Activated T-helper 1 cell treated with anti-CD3 and anti-CD28 coated beads, Interleukin-12 subunit alpha, Interleukin-12 subunit beta, Interleukin-2, Interleukin-4 antibody, amounts not matched to agents 30 ng/mL and 10 ng/mL and 1 ng/mL, durations not matched to agents 14 hours and 24 hours and 36 hours (primary cell): ENCODE measurements at regions of chr15 and their contacts with region 1.

Region 1: DNA sequence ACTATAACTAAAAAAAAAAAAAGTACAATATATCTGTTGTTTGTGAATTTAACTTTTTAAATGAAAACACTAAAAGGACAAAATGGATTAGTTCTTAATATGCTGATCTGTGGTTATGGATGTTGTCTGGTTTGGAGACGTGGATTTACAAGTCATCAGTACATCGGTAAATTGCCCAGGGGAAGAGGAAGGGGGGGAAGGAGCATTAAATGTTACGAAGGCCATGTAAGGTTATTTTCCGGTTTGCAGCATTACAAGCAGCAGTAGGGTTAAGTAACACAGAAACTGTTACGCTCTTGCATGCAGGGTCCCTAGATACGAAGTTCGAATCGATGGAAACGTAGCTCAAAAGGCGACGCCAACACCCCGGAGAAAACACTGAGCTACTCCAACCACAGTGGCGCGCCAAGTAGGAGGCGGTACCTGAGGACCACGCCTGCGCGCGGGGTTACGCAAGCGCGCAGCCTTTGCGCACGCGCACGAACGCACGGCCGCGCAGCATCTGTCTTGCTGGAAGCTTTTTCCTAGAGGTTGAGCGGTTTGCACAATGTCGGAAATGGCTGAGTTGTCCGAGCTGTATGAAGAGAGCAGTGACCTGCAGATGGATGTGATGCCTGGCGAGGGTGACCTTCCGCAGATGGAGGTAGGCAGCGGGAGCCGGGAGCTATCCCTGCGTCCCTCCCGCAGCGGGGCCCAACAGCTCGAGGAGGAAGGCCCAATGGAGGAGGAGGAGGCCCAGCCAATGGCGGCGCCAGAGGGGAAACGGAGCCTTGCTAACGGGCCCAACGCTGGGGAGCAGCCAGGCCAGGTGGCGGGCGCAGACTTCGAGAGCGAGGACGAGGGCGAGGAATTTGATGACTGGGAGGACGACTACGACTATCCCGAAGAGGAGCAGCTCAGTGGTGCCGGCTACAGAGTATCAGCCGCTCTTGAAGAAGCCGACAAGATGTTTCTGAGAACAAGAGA is at the start of gene EID1:
- DNase-seq: peak; percentile 94
- H3K4me3 Mint-ChIP-seq: peak within 1 kb of the TSS; percentile 99
- H3K27ac Mint-ChIP-seq: peak within 1 kb of the TSS; percentile 97
- H3K4me1 Mint-ChIP-seq: peaks cover 69% of the 10 kb centered on the region
- H3K27me3 Mint-ChIP-seq: no peaks in the 10 kb centered on the region
- total RNA-seq, gene EID1: 177 and 183 TPM in 2 replicates

Region 2: GRCh38 chr15:48520376-48521155 is 357.3 kb before region 1 on chr15:
- intact Hi-C with region 1: no loop called
- DNase-seq: no peak
- H3K4me3 Mint-ChIP-seq: no peak overlapping the region
- H3K27ac Mint-ChIP-seq: no peak overlapping the region
- H3K4me1 Mint-ChIP-seq: no peaks in the 10 kb centered on the region
- H3K27me3 Mint-ChIP-seq: no peaks in the 10 kb centered on the region

Region 3: DNA sequence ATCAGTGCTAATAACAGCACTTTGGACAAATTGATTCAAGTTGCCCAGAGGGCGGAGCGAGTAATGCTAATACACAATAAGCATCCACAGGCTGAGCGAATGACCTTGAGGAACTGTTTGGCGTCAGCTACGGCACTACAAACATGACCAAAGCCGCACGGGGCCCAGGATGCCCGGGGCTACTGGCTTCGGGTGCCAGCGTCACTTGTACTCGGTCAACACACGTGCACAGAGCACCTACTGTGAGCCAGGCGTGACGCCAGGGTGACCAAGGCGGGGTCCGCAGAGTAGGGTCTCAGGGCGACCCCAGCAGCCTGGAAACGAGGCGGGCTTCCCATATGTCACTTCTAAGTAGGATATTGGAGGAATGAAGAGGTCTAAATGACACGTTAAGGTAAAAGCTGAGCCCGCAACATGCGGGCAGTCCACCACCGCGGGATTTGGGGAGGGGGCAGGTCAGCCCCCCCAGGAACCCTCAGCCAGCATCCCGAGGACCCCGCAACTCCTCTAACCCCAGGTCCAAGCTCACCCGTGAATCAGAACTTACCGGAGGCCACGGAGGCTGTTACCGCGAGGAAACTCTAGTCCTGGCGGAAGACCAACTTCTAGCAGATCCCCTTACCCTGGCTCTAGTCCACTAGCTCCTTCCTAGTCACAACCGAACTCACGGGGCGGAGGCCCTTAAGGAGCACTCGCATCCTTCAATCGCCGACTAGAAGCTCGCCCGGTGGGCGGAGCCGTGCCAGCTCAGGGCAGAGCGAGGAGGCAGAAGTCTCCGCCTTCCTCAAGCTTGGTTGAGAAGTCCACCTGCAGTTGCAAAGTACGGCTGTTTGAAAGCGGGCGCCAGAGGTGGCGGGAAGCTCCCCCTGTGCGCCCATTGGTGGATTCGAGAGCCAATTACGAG is 67.2 kb before region 1 on chr15 and contains the start of gene CEP152:
- intact Hi-C with region 1: loop called (anchors 1 kb)
- DNase-seq: peak; percentile 98
- H3K4me3 Mint-ChIP-seq: peak within 1 kb of the TSS; percentile 97
- H3K27ac Mint-ChIP-seq: peak within 1 kb of the TSS; percentile 93
- H3K4me1 Mint-ChIP-seq: peaks cover 44% of the 10 kb centered on the region
- H3K27me3 Mint-ChIP-seq: peaks cover 15% of the 10 kb centered on the region
- total RNA-seq, gene CEP152: 27.3 and 28.0 TPM in 2 replicates

Region 4: DNA sequence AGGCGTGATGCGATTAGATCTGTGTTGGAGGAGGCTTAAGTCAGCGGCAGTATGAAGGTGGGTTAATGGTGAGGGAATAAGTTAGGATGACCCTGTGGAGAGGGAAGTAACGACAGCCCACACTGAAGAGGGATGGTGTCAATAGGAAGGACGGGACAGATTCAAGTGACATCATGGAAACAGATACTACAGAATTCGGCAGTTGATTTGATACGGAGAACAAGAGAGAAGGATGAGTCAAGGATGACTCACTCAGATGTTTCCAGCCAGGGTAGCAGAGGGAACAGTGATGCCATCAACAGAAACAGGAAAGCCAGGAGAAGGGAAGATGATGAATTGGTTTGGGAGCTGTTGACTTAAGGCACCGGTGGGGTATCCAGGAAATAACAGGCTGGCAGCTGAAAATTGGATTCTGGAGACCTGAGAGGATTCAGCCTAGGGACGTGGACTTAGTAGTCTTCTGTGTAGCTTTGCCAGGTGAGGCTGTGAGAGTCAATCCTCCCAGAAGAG is 47.9 kb after region 1 on chr15:
- intact Hi-C with region 1: loop called (anchors 1 kb)
- DNase-seq: no peak
- H3K4me3 Mint-ChIP-seq: peak overlapping the region; percentile 31
- H3K27ac Mint-ChIP-seq: peak overlapping the region; percentile 96
- H3K4me1 Mint-ChIP-seq: peaks cover 74% of the 10 kb centered on the region
- H3K27me3 Mint-ChIP-seq: no peaks in the 10 kb centered on the region

Region 5: DNA sequence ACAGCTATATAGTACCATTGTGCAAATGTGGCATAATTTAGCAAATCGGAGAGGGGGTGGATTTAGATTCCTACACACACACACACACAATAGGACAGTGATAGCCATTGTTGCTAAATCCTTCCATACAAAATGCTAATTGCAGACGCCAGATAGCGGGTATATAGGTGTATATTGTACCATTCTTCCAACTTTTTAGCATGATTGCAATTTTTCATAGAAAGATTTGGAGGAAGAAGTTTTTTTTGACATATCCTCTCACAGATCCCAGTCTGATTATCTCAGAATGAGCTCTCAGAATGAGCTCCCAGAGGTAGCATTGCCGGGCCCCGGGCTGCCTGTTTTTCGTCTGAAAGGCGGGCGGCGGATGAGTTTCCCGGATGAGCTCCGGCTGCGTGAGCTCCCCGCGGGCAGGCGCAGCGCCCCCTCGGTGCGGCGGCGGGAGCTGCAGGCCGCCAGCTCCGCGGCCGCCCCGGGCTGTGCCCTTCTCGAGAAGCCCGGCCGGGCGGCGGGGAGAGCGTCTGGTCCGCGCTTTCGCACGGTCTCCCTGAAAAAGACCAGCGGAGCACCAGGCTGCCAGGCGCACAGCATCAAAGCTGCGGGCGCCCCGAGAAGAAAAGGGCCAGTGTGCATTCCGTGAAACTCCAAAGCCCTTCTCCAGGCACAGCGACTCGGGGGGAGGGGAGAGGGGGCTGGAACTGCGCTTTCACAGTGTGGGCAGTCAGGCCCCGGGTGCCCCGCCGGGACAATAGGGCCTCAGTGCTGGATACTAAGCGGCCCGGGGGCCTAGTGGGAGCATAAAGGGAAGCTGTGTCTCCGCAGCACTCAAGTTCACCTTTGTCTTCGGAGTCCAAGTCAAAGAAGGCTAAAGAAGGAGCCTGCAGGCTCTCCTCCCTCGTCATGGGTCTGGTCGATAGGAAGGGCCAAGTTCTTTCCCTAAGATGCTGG is 97.8 kb after region 1 on chr15:
- intact Hi-C with region 1: loop called (anchors 1 kb)
- DNase-seq: peak; percentile 77
- H3K4me3 Mint-ChIP-seq: peak overlapping the region; percentile 60
- H3K27ac Mint-ChIP-seq: peak overlapping the region; percentile 19
- H3K4me1 Mint-ChIP-seq: peaks cover 11% of the 10 kb centered on the region
- H3K27me3 Mint-ChIP-seq: no peaks in the 10 kb centered on the region